ENCODE measurements at regions of chr7 and their contacts with region 1.

Region 1: DNA sequence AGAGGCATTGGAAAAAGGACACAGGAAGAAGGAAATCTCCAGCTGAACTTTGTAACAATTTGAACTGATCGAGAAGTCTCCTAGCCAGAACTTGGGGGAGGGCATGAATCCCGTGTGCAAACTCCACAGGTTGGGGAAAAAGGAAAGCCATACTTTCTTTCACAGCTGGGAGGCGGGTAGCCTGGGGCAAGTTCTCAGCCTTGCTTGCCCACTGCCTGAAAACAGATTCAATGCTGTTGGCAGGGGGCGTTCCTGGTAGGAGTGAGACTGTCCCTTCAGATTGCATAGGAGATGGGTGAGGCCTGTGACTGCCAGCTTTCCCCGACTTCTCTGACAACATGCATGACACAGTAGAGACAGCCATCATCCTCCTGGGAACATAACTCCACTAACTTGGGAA is 289.1 kb upstream of the PHF14 start:
- DNase-seq: no peak
- H3K4me3 ChIP-seq: no peak overlapping the region
- CTCF ChIP-seq: no peak

Region 2: GRCh38 chr7:10727636-10728035 is 43.0 kb after region 1 on chr7:
- in situ Hi-C with region 1: no loop called
- DNase-seq: no peak
- H3K4me3 ChIP-seq: no peak overlapping the region
- CTCF ChIP-seq: no peak

Region 3: GRCh38 chr7:10739401-10739800 is 54.8 kb after region 1 on chr7:
- in situ Hi-C with region 1: loop called (anchors 5 kb)
- DNase-seq: no peak
- H3K4me3 ChIP-seq: no peak overlapping the region
- CTCF ChIP-seq: no peak

Region 4: DNA sequence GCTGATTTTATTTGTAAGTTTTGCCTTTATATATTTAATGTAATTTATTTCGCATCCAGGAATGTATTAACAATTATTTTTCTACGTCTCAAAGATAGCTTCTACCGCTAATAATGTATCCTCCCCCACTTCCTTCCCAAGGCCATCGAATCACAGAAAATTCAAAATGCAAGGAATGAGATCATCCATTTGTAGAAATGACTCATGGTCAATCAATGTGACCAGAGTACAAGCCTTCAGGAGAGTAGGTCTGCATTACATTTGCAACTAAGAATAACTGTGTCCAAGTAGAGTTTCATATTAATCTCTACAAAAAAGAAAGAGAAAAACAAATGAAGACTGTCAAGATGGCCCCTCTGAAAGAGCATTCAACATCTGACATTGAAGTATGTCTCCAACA is 83.2 kb after region 1 on chr7:
- in situ Hi-C with region 1: no loop called
- DNase-seq: no peak
- H3K4me3 ChIP-seq: no peak overlapping the region
- CTCF ChIP-seq: no peak